Caco-2 (cell line): ENCODE measurements at regions of chr6 and their contacts with region 1.

Region 1: DNA sequence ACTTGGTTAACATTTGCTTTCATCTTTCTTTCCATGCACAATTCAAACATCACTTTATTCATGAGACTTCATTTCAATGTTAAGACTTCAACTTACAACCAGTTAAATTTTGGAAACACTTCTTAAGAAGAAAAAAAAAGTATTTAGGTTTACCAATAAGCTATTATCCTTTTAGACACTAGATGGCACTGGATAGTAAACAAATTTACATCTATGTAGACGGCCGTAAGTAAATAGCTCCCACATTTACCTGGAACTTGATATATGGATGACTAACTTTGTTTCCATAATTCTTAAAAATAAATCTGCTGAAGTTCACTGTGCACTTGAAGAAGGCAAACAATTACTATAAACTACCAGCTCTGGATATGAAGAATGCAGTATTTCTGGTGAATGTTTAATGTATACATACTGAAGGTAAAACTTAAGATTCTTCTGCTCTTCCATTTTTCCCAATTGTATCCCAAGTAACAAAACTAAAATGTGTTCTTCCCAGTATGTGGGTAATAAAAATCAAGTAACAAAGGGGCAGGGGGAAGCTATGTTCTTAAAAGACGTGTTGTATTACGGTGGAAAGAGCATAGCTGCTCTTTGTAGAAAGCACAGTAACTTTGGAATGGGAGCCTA is 130.6 kb upstream of the C6orf118 start:
- DNase-seq: no peak
- H3K4me3 ChIP-seq: no peak overlapping the region
- H3K4me3 Mint-ChIP-seq: no peak overlapping the region
- H3K27ac Mint-ChIP-seq: no peak overlapping the region
- H3K4me1 ChIP-seq: no peaks in the 10 kb centered on the region
- H3K4me1 Mint-ChIP-seq: no peaks in the 10 kb centered on the region
- H3K27me3 ChIP-seq: no peaks in the 10 kb centered on the region
- H3K27me3 Mint-ChIP-seq: no peaks in the 10 kb centered on the region
- CTCF ChIP-seq: peak; percentile 30 to 47

Region 2: GRCh38 chr6:165562421-165563090 is 122.5 kb after region 1 on chr6:
- CTCF ChIA-PET with region 1: interaction called, 3 read pairs
- POLR2A ChIA-PET with region 1: no interaction called
- intact Hi-C with region 1: loop called (anchors 1 kb)
- DNase-seq: peak in 1 of 2 experiments; percentile 9
- H3K4me3 ChIP-seq: no peak overlapping the region
- H3K4me3 Mint-ChIP-seq: no peak overlapping the region
- H3K27ac Mint-ChIP-seq: no peak overlapping the region
- H3K4me1 ChIP-seq: no peaks in the 10 kb centered on the region
- H3K4me1 Mint-ChIP-seq: no peaks in the 10 kb centered on the region
- H3K27me3 ChIP-seq: no peaks in the 10 kb centered on the region
- H3K27me3 Mint-ChIP-seq: no peaks in the 10 kb centered on the region
- CTCF ChIP-seq: no peak

Region 3: GRCh38 chr6:165636402-165637048 is 196.5 kb after region 1 on chr6:
- CTCF ChIA-PET with region 1: no interaction called
- POLR2A ChIA-PET with region 1: no interaction called
- intact Hi-C with region 1: loop called (anchors 10 kb)
- DNase-seq: no peak
- H3K4me3 ChIP-seq: no peak overlapping the region
- H3K4me3 Mint-ChIP-seq: no peak overlapping the region
- H3K27ac Mint-ChIP-seq: peak overlapping the region; percentile 20
- H3K4me1 ChIP-seq: 0 out of 2 replicates have a peak, but pooled peaks cover 11% of the 10 kb centered on the region
- H3K4me1 Mint-ChIP-seq: peaks cover 20% of the 10 kb centered on the region
- H3K27me3 ChIP-seq: peaks cover 1% of the 10 kb centered on the region; the same call in 1 of the 2 replicates
- H3K27me3 Mint-ChIP-seq: no peaks in the 10 kb centered on the region
- CTCF ChIP-seq: no peak

Region 4: DNA sequence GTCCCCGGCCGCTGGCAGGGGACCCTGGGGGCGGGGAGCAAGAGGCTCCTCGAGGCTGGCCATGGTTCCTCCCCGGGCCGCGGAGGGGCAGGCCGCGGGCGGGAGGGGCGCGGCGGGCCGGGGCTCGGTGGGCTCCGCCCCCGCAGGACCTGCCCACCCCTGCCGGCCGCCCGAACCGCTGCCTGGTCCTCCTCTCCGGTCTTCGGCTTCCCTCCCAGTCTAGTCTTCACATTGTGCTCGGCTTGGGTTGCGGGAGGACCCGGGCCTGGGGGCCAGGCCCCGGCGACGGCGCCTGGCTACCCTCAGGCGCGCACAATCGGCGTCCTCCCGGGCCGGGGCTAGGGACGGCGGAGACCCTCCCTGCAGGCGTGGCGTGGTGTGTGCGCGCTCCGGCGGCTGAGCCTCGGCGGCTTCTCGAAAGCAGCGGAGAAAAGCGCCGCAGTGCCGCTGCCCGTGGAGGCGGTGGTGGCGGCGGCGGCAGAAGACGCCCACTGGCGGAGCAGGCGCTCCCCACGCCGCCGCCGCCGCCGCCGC is 222.8 kb after region 1 on chr6 and contains the start of gene PDE10A:
- CTCF ChIA-PET with region 1: no interaction called
- POLR2A ChIA-PET with region 1: no interaction called
- intact Hi-C with region 1: loop called (anchors 5 kb)
- DNase-seq: peak; percentile 53 to 58
- H3K4me3 ChIP-seq: peak within 1 kb of the TSS; percentile 47
- H3K4me3 Mint-ChIP-seq: peak within 1 kb of the TSS; percentile 73
- H3K27ac Mint-ChIP-seq: no peak within 1 kb of the TSS
- H3K4me1 ChIP-seq: peaks cover 11% of the 10 kb centered on the region; the same call in 1 of the 2 replicates
- H3K4me1 Mint-ChIP-seq: peaks cover 25% of the 10 kb centered on the region
- H3K27me3 ChIP-seq: 0 out of 2 replicates have a peak, but pooled peaks cover 2% of the 10 kb centered on the region
- H3K27me3 Mint-ChIP-seq: peaks cover 23% of the 10 kb centered on the region
- CTCF ChIP-seq: no peak
- total RNA-seq, gene PDE10A: 3.4 and 3.6 TPM in 2 replicates

Region 5: GRCh38 chr6:165729307-165729936 is 289.4 kb after region 1 on chr6:
- CTCF ChIA-PET with region 1: interaction called, 4 read pairs
- POLR2A ChIA-PET with region 1: no interaction called
- intact Hi-C with region 1: loop called (anchors 5 kb)
- DNase-seq: peak in 1 of 2 experiments; percentile 55
- H3K4me3 ChIP-seq: no peak overlapping the region
- H3K4me3 Mint-ChIP-seq: no peak overlapping the region
- H3K27ac Mint-ChIP-seq: no peak overlapping the region
- H3K4me1 ChIP-seq: no peaks in the 10 kb centered on the region
- H3K4me1 Mint-ChIP-seq: no peaks in the 10 kb centered on the region
- H3K27me3 ChIP-seq: no peaks in the 10 kb centered on the region
- H3K27me3 Mint-ChIP-seq: no peaks in the 10 kb centered on the region
- CTCF ChIP-seq: peak; percentile 68 to 87

Region 6: DNA sequence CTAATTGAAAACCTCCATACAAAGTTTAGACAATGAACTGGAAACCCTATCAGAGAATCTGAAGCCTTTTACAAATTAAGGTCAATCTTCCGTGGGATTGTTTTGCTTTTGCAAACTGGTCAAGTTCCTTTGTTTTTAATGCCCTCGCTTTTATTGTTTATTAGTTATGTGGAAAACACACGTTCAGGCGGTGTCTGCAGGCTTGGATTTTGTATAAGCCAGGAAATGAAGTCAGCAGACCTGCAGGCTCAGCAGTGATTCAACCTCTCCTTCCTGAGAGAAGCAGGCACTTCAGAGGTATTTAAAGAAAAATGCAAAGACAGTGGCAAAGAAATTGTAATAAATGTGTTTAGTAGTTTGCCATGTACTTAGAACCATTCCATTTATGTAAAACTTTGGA is 326.4 kb after region 1 on chr6:
- CTCF ChIA-PET with region 1: no interaction called
- POLR2A ChIA-PET with region 1: no interaction called
- intact Hi-C with region 1: no loop called
- DNase-seq: no peak
- H3K4me3 ChIP-seq: no peak overlapping the region
- H3K4me3 Mint-ChIP-seq: no peak overlapping the region
- H3K27ac Mint-ChIP-seq: no peak overlapping the region
- H3K4me1 ChIP-seq: no peaks in the 10 kb centered on the region
- H3K4me1 Mint-ChIP-seq: no peaks in the 10 kb centered on the region
- H3K27me3 ChIP-seq: no peaks in the 10 kb centered on the region
- H3K27me3 Mint-ChIP-seq: no peaks in the 10 kb centered on the region
- CTCF ChIP-seq: no peak

Region 7: DNA sequence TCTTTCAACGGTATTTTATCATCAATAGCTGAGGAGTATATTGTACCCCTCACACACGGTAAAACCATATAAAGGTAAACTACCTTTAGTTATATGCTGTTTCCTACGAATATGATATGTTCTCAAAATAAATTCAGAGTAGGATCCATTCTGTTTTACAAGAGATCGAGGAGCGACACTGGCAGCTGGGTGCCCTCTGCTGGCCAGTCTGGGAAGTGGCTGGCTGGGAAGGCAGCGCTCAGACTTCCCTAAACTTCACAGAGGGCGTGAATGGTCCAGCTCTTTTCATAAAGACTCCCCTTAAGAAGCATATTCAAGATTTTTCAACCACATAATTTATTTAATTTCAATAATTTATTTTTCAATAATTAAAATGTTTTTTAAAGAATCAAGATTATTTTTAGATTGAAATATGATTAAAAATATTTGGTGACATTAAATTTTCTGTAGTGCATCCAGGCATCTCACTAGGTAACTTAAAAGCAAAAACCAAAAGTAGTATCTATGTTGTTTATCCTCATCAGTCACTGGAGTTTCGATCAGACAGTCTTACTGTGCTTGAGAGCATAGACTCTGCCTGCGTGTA is 410.5 kb after region 1 on chr6:
- CTCF ChIA-PET with region 1: interaction called, 14 read pairs
- POLR2A ChIA-PET with region 1: no interaction called
- intact Hi-C with region 1: loop called (anchors 1 kb)
- DNase-seq: peak; percentile 59 to 73
- H3K4me3 ChIP-seq: no peak overlapping the region
- H3K4me3 Mint-ChIP-seq: no peak overlapping the region
- H3K27ac Mint-ChIP-seq: no peak overlapping the region
- H3K4me1 ChIP-seq: no peaks in the 10 kb centered on the region
- H3K4me1 Mint-ChIP-seq: no peaks in the 10 kb centered on the region
- H3K27me3 ChIP-seq: no peaks in the 10 kb centered on the region
- H3K27me3 Mint-ChIP-seq: peaks cover 6% of the 10 kb centered on the region
- CTCF ChIP-seq: peak; percentile 78 to 96